ENCODE measurements at regions of chr3 and their contacts with region 1.

Region 1: GRCh38 chr3:67654099-67654843 is at the start of gene SUCLG2:
- DNase-seq: peak; percentile 95
- H3K4me3 Mint-ChIP-seq: peak within 1 kb of the TSS; percentile 81
- H3K27ac Mint-ChIP-seq: peak within 1 kb of the TSS; percentile 88
- H3K4me1 Mint-ChIP-seq: peaks cover 54% of the 10 kb centered on the region
- H3K27me3 Mint-ChIP-seq: peaks cover 1% of the 10 kb centered on the region
- total RNA-seq, gene SUCLG2: 33.2 and 34.6 TPM in 2 replicates

Region 2: GRCh38 chr3:66472313-66473134 is 1181.7 kb before region 1 on chr3:
- intact Hi-C with region 1: loop called (anchors 10 kb)
- DNase-seq: peak; percentile 80
- H3K4me3 Mint-ChIP-seq: no peak overlapping the region
- H3K27ac Mint-ChIP-seq: no peak overlapping the region
- H3K4me1 Mint-ChIP-seq: peaks cover 62% of the 10 kb centered on the region
- H3K27me3 Mint-ChIP-seq: no peaks in the 10 kb centered on the region

Region 3: DNA sequence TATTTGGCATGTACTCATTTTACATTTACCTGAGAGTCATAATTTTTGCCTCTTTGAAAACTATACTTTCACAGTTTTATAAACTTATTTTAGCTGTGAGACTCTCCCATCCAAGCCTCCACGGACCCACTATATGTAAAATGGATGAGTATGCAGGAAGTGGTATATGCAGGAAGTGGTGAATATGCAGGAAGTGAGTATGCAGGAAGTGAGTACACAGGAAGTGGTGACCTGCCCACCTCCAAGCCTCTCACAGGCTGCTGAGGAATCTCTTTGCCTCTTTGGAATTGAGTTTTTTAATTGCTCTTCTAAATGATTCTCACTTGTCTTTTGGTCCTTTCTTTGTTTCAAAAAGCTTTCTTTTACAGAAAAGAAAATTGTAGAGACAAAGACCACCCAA is 571.0 kb before region 1 on chr3:
- intact Hi-C with region 1: loop called (anchors 10 kb)
- DNase-seq: peak; percentile 81
- H3K4me3 Mint-ChIP-seq: peak overlapping the region; percentile 13
- H3K27ac Mint-ChIP-seq: peak overlapping the region; percentile 61
- H3K4me1 Mint-ChIP-seq: peaks cover 17% of the 10 kb centered on the region
- H3K27me3 Mint-ChIP-seq: no peaks in the 10 kb centered on the region

Region 4: DNA sequence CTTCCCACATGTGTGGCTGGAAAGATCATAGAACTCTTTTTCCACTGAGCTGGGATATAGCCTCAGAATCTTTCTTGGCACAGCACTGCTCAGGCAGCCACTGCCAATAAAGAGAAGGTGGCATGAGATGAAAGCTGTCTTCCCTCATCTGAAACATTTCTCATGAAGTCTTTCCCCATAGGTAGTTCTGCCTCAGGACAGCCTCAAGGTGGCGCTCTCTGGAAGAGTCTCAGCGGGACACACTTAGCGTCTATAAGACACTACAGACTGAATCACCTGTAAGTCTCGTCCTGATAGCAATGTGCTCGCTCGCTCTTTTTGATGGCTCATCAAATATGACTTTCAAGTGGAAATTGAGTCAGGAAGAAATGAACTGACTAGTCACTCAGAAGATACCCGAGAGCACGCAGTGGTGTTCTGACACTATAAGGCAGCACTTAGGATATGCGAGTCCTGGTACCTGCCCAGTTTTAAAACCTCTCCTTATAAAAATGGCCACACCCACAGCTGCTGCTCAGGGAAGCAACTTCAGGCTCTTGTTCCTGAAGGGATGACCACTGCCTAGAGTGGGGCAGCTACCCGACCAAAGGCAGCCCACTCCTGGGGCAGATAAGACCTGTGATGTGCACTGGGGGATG is 269.4 kb before region 1 on chr3:
- intact Hi-C with region 1: loop called (anchors 5 kb)
- DNase-seq: peak; percentile 79
- H3K4me3 Mint-ChIP-seq: no peak overlapping the region
- H3K27ac Mint-ChIP-seq: no peak overlapping the region
- H3K4me1 Mint-ChIP-seq: peaks cover 12% of the 10 kb centered on the region
- H3K27me3 Mint-ChIP-seq: no peaks in the 10 kb centered on the region

Region 5: DNA sequence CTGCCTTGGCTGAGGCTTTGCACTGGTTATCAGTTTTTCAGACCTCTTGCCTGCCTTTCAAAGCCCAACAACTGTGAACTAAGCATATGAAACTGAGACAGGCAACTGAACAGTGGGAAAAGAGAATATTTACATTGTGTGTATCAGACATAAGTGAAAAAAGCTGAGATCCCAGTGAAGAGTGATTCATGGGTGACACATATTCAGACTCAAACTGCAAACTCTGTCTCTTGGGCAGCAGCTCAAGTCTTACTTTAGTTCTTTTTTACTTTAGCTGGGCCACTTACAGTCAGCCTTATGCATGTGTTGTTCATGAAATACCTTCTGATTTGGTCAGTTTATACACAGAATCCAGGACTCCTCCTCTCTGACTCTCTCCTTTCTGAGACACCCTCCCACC is 19.0 kb before region 1 on chr3:
- intact Hi-C with region 1: loop called (anchors 1 kb)
- DNase-seq: no peak
- H3K4me3 Mint-ChIP-seq: no peak overlapping the region
- H3K27ac Mint-ChIP-seq: peak overlapping the region; percentile 66
- H3K4me1 Mint-ChIP-seq: peaks cover 26% of the 10 kb centered on the region
- H3K27me3 Mint-ChIP-seq: no peaks in the 10 kb centered on the region

Region 6: DNA sequence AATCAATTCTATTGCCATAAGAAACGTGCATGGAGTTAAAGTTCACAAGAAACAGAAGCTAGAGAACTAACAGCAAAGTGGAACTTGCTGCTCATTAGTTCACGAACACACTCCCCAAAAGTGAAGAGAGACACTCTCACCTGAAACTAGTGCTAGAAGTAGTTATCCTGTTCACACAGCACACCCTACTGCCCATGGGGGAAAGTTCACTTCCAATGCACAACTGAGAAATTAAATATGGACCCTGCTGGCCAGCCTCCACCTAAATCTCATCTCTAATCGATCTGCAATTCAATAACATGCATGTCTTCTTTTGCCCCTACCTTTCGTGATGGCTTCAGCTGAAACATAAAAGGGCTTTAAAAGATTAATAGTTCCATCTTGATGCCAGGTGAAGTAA is 1771.0 kb after region 1 on chr3:
- intact Hi-C with region 1: loop called (anchors 10 kb)
- DNase-seq: peak; percentile 79
- H3K4me3 Mint-ChIP-seq: no peak overlapping the region
- H3K27ac Mint-ChIP-seq: no peak overlapping the region
- H3K4me1 Mint-ChIP-seq: peaks cover 5% of the 10 kb centered on the region
- H3K27me3 Mint-ChIP-seq: peaks cover 3% of the 10 kb centered on the region